ENCODE measurements at regions of chr7 and their contacts with region 1.

Region 1: DNA sequence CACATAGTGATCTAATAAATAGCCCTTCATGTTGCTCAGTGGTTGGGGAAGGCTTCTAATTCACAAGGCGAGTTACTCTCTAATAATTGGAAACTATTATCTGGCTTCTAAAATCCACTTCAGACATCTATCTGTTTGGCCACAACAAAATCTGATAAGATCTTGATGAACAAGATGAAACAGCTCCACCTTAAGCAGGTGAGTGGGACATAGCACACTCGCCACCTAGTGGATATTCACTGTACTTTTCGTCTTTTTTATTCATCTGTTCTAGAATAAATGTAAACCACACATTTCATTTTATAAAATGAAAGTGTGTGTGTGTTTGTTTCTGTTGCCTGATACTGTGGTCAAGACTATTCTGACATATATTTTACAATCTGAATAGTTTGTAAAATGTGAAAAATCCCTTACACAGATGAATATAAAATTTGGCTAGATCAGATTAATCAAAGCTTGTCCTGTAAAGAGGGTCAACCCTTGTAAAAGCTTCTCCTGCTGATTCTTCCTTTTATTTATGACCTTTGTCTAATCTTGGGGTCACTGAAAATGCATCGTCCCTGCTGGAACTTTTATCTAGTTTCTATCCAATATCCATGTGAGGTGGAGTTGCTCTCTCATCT is 26.5 kb upstream of the CNTNAP2 start:
- DNase-seq: peak; percentile 49
- CTCF ChIP-seq: peak; percentile 52

Region 2: DNA sequence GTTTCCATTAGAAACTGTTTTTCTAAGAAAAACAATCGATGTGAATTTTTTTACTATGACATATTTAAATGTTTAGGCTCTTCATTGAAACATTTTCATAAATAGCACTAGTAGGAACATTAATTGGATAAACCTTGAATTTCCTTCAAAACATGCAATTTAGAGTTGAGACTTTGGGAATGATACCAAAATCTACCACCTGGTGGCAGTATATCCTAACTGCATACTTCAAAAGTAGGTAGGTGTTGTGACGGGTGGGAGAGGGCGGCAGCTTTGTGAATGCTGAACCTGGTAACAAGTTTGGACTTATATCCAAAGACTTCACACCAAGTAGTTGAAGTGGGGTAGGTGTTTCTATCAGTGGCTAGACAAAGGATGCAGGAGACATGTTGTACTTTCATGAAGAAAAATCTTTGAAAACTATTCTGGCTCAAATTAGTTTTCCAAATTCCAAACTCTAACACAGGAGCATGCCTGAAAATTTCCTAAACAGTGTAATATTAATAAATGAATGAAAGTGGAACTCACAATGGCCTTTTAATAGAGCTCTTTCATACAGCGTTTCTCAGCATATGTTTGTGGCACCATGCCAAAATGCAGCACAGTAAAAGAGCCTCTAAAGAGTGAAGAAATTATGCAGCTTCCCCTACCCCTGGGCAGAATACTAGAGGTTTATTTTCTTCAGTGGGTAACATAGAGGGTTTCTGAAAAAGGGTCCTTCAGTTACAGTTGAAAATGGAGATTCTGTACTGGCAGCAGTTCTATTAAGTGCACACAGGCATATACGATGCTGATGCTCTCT is 1053.3 kb before region 1 on chr7:
- in situ Hi-C with region 1: loop called (anchors 10 kb)
- DNase-seq: peak; percentile 22
- CTCF ChIP-seq: peak; percentile 50

Region 3: DNA sequence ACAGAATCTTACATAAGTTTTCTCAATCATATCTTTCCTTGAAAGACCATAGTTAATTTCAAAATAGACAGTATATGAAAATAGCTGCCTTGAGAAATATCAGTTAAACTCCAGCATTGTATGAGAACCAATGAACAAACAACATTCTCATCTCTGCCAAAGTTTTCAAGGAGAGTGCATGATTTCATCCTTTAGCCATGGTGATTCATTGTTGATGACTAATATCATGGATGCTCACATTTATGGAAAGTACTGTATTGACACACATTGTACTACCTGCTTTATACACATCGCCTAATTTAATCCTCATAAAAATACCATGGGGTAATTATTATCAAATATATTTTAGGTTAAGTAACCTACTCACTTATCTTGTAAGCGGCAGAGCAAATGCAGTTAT is 276.8 kb after region 1 on chr7:
- in situ Hi-C with region 1: no loop called
- DNase-seq: no peak
- CTCF ChIP-seq: no peak

Measured in GM13976 (cell line).